CD8-positive, alpha-beta memory T cell (primary cell): ENCODE measurements at regions of chr20 and their contacts with region 1.

Region 1: GRCh38 chr20:64079273-64080012 is at the start of gene RGS19:
- DNase-seq: peak; percentile 61 to 80 (median 65)
- H3K4me3 ChIP-seq: peak within 1 kb of the TSS; percentile 81
- H3K4me3 Mint-ChIP-seq: peak within 1 kb of the TSS; percentile 83 to 93 (median 89)
- H3K27ac ChIP-seq: peak within 1 kb of the TSS; percentile 81
- H3K27ac Mint-ChIP-seq: peak within 1 kb of the TSS; percentile 84 to 95 (median 90)
- H3K4me1 ChIP-seq: peaks cover 36% of the 10 kb centered on the region
- H3K4me1 Mint-ChIP-seq: peaks cover 16 to 64% (median 30%) of the 10 kb centered on the region in 3 donors
- H3K27me3 ChIP-seq: no peaks in the 10 kb centered on the region
- H3K27me3 Mint-ChIP-seq: peaks cover 2 to 3% of the 10 kb centered on the region in 2 donors
- total RNA-seq, gene RGS19: 35.3 to 36.9 TPM

Region 2: DNA sequence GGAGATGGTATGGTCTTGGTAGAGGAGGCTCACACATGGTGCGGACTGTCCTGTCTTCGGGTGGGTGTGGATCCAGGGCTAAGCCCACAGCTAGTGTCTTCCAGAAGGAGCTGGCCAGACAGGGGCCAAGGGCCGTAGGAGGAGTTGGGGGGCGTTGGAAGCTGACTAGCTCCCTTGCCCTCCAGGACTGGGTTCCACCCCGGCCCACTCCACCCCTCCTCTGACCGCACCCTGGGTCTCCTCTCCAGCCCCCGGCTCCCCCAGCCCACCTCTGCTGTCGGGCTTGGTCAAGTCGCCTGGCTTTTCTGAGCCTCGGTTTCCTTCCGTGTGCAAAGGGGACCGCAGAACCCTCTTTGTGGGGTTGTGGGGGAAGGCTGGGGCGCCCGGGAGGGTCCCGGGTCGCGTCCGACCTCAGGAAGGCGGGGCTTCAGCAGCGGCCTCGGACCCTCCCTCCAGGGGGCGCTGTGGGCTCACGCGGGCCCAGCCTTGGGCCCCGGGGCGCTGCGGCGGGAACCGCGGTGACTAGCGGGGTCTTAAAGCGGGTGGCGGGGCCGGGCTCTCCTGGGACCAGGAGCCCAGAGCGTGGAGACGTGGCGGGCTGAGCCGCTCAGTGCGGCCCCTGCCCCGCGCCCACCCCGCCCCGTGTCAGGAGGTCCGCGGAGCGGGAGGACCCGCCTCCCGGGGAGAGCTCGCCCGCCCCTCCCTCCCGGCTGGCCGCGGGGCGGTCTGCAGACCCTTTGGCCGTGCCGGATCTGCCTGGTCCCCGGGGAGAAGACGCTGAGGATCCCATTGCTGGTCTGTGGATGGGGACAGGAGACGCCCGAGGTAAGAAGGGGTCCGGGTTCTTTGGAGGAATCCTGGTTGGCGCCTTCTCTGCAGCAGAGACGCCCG is 22.5 kb after region 1 on chr20:
- CTCF ChIA-PET with region 1: interaction called, 13 read pairs
- POLR2A ChIA-PET with region 1: no interaction called
- DNase-seq: peak; percentile 50 to 69 (median 61)
- H3K4me3 ChIP-seq: no peak overlapping the region
- H3K4me3 Mint-ChIP-seq: peak overlapping the region in 4 of 7 donors; percentile 33 to 72 (median 60)
- H3K27ac ChIP-seq: no peak overlapping the region
- H3K27ac Mint-ChIP-seq: peak overlapping the region in 3 of 8 donors; percentile 19 to 72 (median 27)
- H3K4me1 ChIP-seq: peaks cover 6% of the 10 kb centered on the region
- H3K4me1 Mint-ChIP-seq: peaks cover 0 to 27% (median 11%) of the 10 kb centered on the region in 3 donors
- H3K27me3 ChIP-seq: peaks cover 7% of the 10 kb centered on the region
- H3K27me3 Mint-ChIP-seq: peaks cover 9 to 21% of the 10 kb centered on the region in 2 donors

Region 3: DNA sequence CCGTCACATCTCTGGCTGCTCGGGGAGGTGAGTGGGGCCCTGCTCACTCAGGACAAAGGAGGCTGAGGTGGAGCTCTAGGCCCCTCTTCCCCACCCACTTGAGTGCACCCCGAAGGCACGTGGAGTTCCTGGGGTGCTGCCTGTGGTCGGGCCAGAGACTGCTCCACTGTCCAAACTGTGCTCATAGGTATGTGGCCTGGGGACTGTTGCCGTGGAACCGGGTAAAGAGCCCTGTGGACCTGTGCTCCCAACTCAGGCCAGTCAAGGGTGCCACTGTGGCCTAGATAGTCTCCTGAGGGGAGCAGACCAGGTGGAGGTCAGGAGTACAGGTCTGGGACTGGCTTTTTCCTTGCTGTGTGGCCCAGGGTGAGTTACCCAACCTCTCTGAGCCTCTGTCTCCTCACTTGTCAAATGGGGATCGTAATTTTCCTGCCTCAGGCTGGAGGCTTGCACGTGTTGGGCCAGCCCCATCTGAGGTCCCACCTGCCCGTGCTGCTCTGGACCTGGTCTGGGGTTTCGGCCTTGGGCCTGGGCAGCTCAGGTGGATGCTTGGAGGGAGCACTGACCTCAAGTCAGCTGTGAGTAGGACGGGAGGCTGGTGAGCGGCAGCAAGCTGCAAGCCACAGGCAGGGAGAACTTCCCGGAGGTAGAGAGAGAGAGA is 40.4 kb after region 1 on chr20:
- CTCF ChIA-PET with region 1: interaction called, 71 read pairs
- POLR2A ChIA-PET with region 1: no interaction called
- DNase-seq: no peak
- H3K4me3 ChIP-seq: peak overlapping the region; percentile 43
- H3K4me3 Mint-ChIP-seq: peak overlapping the region; percentile 47 to 74 (median 70)
- H3K27ac ChIP-seq: no peak overlapping the region
- H3K27ac Mint-ChIP-seq: peak overlapping the region in 5 of 8 donors; percentile 9 to 78 (median 44)
- H3K4me1 ChIP-seq: peaks cover 11% of the 10 kb centered on the region
- H3K4me1 Mint-ChIP-seq: peaks cover 6 to 10% (median 7%) of the 10 kb centered on the region in 3 donors
- H3K27me3 ChIP-seq: no peaks in the 10 kb centered on the region
- H3K27me3 Mint-ChIP-seq: peaks cover 8 to 23% of the 10 kb centered on the region in 2 donors